Calu3 (cell line): ENCODE measurements at regions of chr3 and their contacts with region 1.

Region 1: GRCh38 chr3:4656059-4656458 is 162.9 kb downstream of the ITPR1 start:
- DNase-seq: peak; percentile 72
- H3K4me3 Mint-ChIP-seq: no peak overlapping the region
- H3K27ac Mint-ChIP-seq: no peak overlapping the region
- H3K4me1 Mint-ChIP-seq: peaks cover 7% of the 10 kb centered on the region
- H3K27me3 Mint-ChIP-seq: no peaks in the 10 kb centered on the region
- CTCF ChIP-seq: peak; percentile 90

Region 2: DNA sequence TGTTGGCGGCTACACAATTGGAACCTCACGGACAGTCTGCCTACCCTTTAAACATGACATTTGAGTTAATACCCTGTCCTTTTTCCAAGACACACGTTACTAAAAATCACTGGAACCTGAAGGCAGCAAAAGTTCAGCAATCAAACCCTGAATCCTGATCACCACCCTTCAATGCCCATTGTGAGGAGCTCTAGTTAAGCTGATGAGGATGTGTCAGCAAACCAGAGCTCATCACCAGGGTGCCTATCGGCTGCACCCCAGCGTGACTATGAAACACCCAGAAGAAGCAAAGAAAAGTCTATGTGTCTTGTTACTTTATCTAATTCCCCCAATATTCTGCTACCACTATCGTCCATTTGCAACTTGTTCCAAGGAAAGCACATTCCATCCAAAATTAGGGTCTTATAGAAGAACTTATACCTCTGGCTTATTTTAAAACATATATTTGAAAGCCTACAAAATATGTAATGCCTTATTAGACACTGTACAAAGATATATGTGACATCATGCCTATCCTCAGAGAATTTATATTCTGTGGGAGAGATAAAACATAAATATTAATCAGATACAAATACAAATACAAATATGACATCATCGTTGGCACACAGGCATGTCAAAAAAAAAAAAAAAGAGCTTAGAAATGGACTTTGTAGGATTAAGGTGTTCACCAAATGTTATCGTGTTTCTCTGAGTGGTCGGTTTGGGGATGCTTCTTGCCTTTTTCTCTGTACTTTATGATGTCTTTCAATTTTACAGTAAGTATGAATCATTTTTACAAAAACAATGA is 572.6 kb before region 1 on chr3:
- CTCF ChIA-PET with region 1: no interaction called
- intact Hi-C with region 1: no loop called
- DNase-seq: no peak
- H3K4me3 Mint-ChIP-seq: no peak overlapping the region
- H3K27ac Mint-ChIP-seq: no peak overlapping the region
- H3K4me1 Mint-ChIP-seq: peaks cover 7% of the 10 kb centered on the region
- H3K27me3 Mint-ChIP-seq: no peaks in the 10 kb centered on the region
- CTCF ChIP-seq: no peak

Region 3: DNA sequence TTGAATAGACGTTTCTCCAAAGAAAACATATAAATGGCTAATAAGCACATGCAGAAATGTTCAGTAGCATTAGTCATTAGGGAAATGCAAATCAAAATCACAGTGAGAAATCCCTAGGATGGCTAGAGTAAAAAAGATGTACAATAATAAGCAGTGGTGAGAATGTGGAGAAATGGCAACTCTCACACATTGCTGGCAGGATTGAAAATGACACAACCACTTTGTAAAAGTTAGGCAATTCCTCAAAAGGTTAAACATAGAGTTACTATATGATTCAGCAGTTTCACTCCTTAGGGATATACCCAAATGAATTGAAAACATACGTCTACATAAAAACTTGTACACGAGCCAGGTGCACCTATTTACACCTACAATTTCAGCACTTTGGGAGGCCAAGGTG is 54.2 kb before region 1 on chr3:
- CTCF ChIA-PET with region 1: no interaction called
- intact Hi-C with region 1: no loop called
- DNase-seq: no peak
- H3K4me3 Mint-ChIP-seq: no peak overlapping the region
- H3K27ac Mint-ChIP-seq: no peak overlapping the region
- H3K4me1 Mint-ChIP-seq: no peaks in the 10 kb centered on the region
- H3K27me3 Mint-ChIP-seq: no peaks in the 10 kb centered on the region
- CTCF ChIP-seq: no peak

Region 4: GRCh38 chr3:4644951-4645350 is 11.1 kb before region 1 on chr3:
- CTCF ChIA-PET with region 1: no interaction called
- intact Hi-C with region 1: no loop called
- DNase-seq: no peak
- H3K4me3 Mint-ChIP-seq: no peak overlapping the region
- H3K27ac Mint-ChIP-seq: no peak overlapping the region
- H3K4me1 Mint-ChIP-seq: no peaks in the 10 kb centered on the region
- H3K27me3 Mint-ChIP-seq: peaks cover 14% of the 10 kb centered on the region
- CTCF ChIP-seq: no peak

Region 5: GRCh38 chr3:4741404-4742307 is 85.6 kb after region 1 on chr3:
- CTCF ChIA-PET with region 1: no interaction called
- intact Hi-C with region 1: no loop called
- DNase-seq: peak; percentile 73
- H3K4me3 Mint-ChIP-seq: peak overlapping the region; percentile 33
- H3K27ac Mint-ChIP-seq: peak overlapping the region; percentile 91
- H3K4me1 Mint-ChIP-seq: peaks cover 77% of the 10 kb centered on the region
- H3K27me3 Mint-ChIP-seq: no peaks in the 10 kb centered on the region
- CTCF ChIP-seq: no peak

Region 6: GRCh38 chr3:5057857-5058324 is 401.8 kb after region 1 on chr3:
- CTCF ChIA-PET with region 1: interaction called, 4 read pairs
- intact Hi-C with region 1: loop called (anchors 1 kb)
- DNase-seq: peak; percentile 74
- H3K4me3 Mint-ChIP-seq: no peak overlapping the region
- H3K27ac Mint-ChIP-seq: no peak overlapping the region
- H3K4me1 Mint-ChIP-seq: peaks cover 8% of the 10 kb centered on the region
- H3K27me3 Mint-ChIP-seq: peaks cover 13% of the 10 kb centered on the region
- CTCF ChIP-seq: peak; percentile 52